MCF 10A (cell line): ENCODE measurements at regions of chr19 and their contacts with region 1.

Region 1: DNA sequence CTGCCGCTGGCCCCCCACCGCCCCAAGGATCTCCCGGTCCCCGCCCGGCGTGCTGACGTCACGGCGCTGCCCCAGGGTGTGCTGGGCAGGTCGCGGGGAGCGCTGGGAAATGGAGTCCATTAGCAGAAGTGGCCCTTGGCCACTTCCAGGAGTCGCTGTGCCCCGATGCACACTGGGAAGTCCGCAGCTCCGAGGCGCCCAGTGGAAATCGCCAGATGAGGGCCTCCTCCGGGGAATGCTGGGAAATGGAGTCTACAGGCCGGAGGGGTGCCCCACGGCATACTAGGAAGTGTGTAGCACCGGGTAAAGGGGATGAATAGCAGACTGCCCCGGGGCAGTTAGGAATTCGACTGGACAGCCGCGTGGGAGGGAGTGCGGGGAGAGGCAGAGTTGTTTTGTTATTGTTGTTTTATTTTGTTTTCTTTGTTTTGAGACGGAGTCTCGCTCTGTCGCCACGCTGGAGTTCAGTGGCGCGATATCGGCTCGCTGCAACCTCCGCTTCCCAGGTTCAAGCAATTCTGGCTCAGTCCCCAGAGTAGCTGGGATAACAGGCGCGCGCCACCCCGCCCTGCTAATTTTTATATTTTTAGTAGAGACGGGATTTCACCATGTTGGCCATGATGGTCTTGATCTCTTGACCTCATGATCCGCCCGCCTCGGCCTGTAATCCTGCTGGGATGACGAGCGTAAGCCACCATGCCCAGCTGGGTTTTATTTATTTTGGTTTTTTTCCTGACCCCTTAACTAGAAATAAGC is at the start of gene PPP1R12C:
- DNase-seq: peak; percentile 99
- H3K4me3 Mint-ChIP-seq: peak within 1 kb of the TSS; percentile 87
- H3K27ac Mint-ChIP-seq: peak within 1 kb of the TSS; percentile 92
- H3K4me1 Mint-ChIP-seq: peaks cover 25% of the 10 kb centered on the region
- H3K27me3 Mint-ChIP-seq: peaks cover 4% of the 10 kb centered on the region
- CTCF ChIP-seq: no peak
- total RNA-seq, gene PPP1R12C: 76.4 and 88.6 TPM in 2 replicates

Region 2: DNA sequence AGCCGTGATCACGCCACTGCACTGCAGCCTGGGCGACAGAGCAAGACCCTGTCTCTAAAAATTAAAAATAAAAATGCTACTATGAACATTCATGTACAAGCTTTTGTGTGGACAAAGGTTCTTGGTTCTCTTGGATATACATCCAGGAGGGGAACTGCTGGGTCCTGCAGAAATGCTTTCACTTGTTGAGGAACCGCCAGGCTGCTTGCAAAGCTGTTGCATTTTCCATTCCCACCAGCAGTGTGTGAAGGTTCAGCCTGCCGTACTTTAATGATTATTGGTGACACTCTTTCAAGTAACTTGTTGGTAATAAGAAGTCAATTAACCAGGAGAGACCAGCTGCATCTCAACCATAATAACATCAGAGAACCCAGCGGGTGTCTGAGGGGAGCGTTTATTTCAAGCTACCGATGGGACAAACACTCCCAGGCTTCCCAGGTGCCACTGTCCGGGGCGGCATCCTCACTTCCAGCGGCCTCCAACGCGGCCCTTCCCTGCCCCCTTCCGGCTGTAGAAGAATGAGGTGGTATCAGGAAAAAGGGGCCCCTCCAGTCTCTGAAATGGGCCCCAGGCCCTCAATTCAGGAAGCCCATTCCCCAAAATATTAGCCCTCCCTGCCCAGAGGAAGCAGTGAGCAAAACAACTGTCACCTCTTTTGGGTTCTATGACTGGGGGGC is 14.8 kb after region 1 on chr19:
- CTCF ChIA-PET with region 1: interaction called, 3 read pairs
- POLR2A ChIA-PET with region 1: interaction called, 12 read pairs
- intact Hi-C with region 1: no loop called
- DNase-seq: no peak
- H3K4me3 Mint-ChIP-seq: no peak overlapping the region
- H3K27ac Mint-ChIP-seq: no peak overlapping the region
- H3K4me1 Mint-ChIP-seq: no peaks in the 10 kb centered on the region
- H3K27me3 Mint-ChIP-seq: no peaks in the 10 kb centered on the region
- CTCF ChIP-seq: no peak